Endothelial cell of umbilical vein (primary cell): ENCODE measurements at regions of chr2 and their contacts with region 1.

Region 1: DNA sequence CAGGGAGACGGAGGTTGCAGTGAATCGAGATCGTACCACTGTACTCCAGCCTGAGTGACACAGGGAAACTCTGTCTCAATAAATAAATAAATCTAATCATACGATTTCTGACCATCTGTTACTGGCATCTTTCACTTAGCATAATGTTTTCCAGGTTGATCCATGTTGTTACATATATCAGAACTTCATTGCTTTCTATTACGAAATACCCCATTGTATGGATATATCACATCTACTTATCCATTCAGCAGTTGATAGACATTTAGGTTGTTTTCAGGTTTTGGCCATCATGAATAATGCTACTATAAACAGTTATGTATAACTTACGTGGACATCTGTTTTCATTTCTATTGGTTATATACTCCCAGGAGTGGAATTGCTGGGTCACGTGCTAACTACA is 303.9 kb downstream of the PAX3 start:
- DNase-seq: no peak
- H3K4me3 ChIP-seq: no peak overlapping the region
- H3K27ac ChIP-seq: no peak overlapping the region
- H3K4me1 ChIP-seq: no peaks in the 10 kb centered on the region
- H3K27me3 ChIP-seq: no peaks in the 10 kb centered on the region
- CTCF ChIP-seq: no peak
- POLR2A ChIP-seq: no peak

Region 2: GRCh38 chr2:221929259-221929658 is 65.7 kb before region 1 on chr2:
- CTCF ChIA-PET with region 1: no interaction called
- POLR2A ChIA-PET with region 1: no interaction called
- dilution Hi-C with region 1: no loop called
- intact Hi-C with region 1: loop called (anchors 2 kb)
- DNase-seq: no peak
- H3K4me3 ChIP-seq: no peak overlapping the region
- H3K27ac ChIP-seq: no peak overlapping the region
- H3K4me1 ChIP-seq: no peaks in the 10 kb centered on the region
- H3K27me3 ChIP-seq: no peaks in the 10 kb centered on the region
- CTCF ChIP-seq: no peak
- POLR2A ChIP-seq: no peak